Left cardiac atrium (tissue), 4 donors: ENCODE measurements at regions of chr3 and their contacts with region 1.

Region 1: DNA sequence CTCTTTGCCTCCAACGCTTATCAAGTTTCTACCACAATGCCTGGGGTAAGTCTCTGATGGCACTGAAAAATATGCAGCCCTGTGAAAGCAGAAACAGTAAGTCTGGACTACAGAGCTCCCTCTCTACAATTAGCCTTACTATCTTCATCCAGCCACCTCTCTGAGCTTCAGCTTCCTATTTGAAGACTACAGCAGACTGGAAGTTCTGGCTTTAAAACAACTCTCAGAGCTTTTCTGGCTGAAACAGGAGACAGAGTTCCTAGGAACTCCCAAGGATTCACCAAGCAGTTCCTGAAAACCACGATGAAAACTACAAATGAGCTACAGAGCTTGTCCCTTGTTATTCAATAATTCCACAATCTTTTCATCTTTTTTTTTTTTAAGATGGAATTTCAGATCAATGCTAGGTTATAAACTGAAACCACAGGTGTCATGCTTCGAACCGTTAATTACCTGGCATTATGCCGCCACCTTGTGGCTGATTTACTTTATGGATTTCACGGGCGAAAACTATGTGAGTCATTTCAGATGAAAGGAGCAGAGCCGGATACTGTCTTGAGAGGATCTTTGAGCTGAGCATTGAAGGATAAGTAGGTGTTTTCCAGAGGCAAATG is 3.9 kb downstream of the CRYGS start:
- DNase-seq: peak; percentile 58
- ATAC-seq: peak; percentile 73 to 86

Region 2: DNA sequence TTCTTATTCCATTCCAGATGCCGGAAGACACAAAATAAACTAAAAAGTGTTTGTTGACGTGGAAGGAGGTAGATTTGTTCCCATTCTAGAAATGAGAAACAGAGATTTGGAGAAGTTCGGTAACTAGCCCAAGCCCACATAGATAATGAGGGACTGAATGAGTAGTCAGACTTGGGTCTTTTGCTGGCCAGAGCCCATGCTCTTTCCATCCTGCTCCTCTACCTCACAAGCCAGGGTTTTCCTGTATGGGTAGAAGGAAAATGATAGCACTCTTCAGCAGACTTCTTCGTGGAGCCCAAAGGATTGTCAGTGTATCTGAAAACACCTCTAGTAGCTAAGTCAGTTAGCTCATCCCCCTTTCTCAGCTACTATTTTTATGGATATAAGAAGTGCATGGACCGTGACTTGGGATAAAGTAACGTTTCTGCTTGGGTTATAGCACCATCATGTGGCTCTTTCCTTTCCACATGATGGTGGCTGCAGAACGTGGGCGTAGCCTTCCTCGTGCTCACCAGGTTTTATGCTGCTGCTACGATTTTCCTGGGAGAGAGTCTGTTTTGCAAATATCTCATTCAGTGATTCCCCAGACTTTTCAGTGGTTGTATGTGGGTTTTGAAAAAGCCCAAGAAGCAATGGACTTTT is 262.9 kb before region 1 on chr3:
- intact Hi-C with region 1: loop called in 1 of 2 experiments (anchors 5 kb)
- DNase-seq: peak; percentile 31
- ATAC-seq: peak; percentile 72 to 86